CD4-positive, alpha-beta T cell (primary cell): ENCODE measurements at regions of chr11 and their contacts with region 1.

Region 1: GRCh38 chr11:2725368-2726300 is 25.8 kb upstream of the KCNQ1OT1 start:
- DNase-seq: no peak
- ATAC-seq: no peak
- H3K4me3 ChIP-seq: no peak overlapping the region
- H3K4me3 Mint-ChIP-seq: no peak overlapping the region
- H3K27ac ChIP-seq: no peak overlapping the region
- H3K27ac Mint-ChIP-seq: no peak overlapping the region
- H3K4me1 ChIP-seq: no peaks in the 10 kb centered on the region
- H3K4me1 Mint-ChIP-seq: no peaks in the 10 kb centered on the region
- H3K27me3 ChIP-seq: no peaks in the 10 kb centered on the region
- H3K27me3 Mint-ChIP-seq: no peaks in the 10 kb centered on the region
- CTCF ChIP-seq: no peak

Region 2: DNA sequence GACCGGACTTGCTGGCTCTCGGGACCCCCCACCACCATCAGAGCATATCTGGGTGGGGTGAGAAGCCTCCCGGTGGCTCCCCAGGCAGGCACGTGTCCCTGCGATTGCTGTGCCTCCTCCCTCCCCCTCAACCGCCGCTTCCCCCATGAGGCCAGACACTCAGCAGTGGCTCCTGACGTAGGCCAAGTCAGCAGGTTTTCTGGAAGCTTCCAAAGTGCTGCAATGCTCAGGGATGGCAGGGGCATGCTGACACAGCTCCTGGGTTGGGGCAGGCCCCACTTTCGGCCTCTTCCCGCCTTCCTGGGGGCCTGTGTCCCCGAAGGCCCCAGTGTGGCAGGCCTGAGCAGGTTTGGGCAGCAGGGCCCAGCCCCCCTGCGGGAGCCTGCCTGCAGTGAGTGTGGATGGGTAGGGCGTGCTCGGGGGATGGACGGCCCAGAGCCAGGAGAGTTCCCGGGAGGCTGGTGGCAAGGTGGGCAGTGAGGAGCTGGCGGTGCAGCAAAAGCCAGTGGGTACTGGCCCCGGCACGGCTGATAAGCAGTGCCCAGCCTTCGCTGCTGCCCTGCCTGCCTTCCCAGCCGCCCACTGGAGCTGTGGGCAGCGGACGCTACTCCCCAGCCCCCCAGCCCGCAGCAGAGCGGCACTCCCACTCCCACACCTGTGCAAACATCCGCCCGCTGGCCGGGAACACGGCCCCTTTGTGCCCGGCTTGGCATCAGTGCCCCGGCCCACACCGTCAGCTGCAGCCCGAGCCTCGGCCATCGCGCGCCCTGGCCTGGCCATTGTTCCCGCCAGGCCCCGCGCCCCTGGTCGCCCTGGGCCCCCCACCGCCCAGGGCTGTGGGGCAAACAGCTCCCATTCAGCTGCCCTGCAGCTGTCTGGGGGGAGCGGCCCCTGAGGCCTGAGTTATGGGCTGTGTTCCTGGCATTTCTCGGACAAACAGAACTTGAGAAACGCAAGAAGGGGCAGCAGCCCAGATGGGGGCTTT is 150.8 kb before region 1 on chr11:
- CTCF ChIA-PET with region 1: no interaction called
- POLR2A ChIA-PET with region 1: no interaction called
- intact Hi-C with region 1: loop called in 1 of 2 experiments (anchors 10 kb)
- DNase-seq: peak in 1 of 14 experiments; percentile 2
- ATAC-seq: no peak
- H3K4me3 ChIP-seq: no peak overlapping the region
- H3K4me3 Mint-ChIP-seq: no peak overlapping the region
- H3K27ac ChIP-seq: no peak overlapping the region
- H3K27ac Mint-ChIP-seq: no peak overlapping the region
- H3K4me1 ChIP-seq: no peaks in the 10 kb centered on the region
- H3K4me1 Mint-ChIP-seq: no peaks in the 10 kb centered on the region
- H3K27me3 ChIP-seq: no peaks in the 10 kb centered on the region
- H3K27me3 Mint-ChIP-seq: no peaks in the 10 kb centered on the region
- CTCF ChIP-seq: no peak

Region 3: DNA sequence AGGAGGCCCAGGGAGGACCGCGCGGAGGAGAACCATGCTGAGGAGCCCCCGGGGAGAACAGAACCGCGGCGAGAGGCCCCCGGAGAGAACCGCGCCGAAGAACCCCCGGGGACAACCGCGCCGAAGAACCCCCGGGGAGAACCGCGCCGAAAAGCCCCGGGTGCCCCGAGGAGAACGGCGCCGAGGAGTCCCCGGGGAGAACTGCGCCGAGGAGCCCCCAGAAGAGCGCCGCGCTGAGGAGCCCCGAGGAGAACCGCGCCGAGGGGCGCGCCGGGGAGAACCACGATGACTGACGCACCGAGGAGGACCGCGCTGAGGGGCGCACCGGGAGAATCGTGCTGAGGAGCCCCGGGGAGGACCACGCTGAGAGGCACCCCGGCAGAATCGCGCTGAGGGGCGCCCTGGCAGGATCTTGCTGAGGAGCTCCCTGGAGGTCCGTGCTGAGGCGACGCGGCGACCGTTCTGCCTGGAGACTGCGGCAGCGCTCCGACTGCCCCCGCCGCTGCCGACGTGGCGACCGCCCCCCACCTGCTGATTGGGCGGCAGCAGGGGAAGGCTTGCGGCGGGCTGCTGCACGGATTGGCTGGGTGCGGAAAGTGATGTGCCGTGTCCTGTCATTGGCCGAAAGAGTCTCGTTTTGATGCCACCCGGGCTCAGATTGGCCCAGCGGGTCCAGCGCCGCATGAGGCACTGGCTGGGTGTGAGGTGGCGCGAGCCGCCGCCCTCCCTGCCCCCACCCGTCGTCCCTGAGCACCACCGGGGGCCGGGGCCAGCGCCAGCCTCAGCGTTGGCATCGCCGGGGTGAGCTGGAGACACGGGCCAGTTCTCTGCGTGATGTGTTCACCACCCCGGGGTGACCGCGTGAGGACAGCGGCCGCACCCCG is 25.9 kb before region 1 on chr11 and contains the start of gene KCNQ1OT1:
- CTCF ChIA-PET with region 1: no interaction called
- POLR2A ChIA-PET with region 1: no interaction called
- intact Hi-C with region 1: no loop called
- DNase-seq: peak; percentile 73 to 95 (median 82)
- ATAC-seq: peak; percentile 97
- H3K4me3 ChIP-seq: peak within 1 kb of the TSS; percentile 66
- H3K4me3 Mint-ChIP-seq: peak within 1 kb of the TSS; percentile 80
- H3K27ac ChIP-seq: no peak within 1 kb of the TSS
- H3K27ac Mint-ChIP-seq: peak within 1 kb of the TSS; percentile 33
- H3K4me1 ChIP-seq: peaks cover 18% of the 10 kb centered on the region
- H3K4me1 Mint-ChIP-seq: peaks cover 7% of the 10 kb centered on the region
- H3K27me3 ChIP-seq: no peaks in the 10 kb centered on the region
- H3K27me3 Mint-ChIP-seq: no peaks in the 10 kb centered on the region
- CTCF ChIP-seq: no peak
- total RNA-seq, gene KCNQ1OT1: 0.17 to 0.22 TPM

Region 4: GRCh38 chr11:2804701-2805387 is 79.2 kb after region 1 on chr11:
- CTCF ChIA-PET with region 1: no interaction called
- POLR2A ChIA-PET with region 1: no interaction called
- intact Hi-C with region 1: no loop called
- DNase-seq: peak in 3 of 14 experiments; percentile 0 to 32 (median 1)
- ATAC-seq: no peak
- H3K4me3 ChIP-seq: no peak overlapping the region
- H3K4me3 Mint-ChIP-seq: no peak overlapping the region
- H3K27ac ChIP-seq: no peak overlapping the region
- H3K27ac Mint-ChIP-seq: no peak overlapping the region
- H3K4me1 ChIP-seq: no peaks in the 10 kb centered on the region
- H3K4me1 Mint-ChIP-seq: peaks cover 19% of the 10 kb centered on the region
- H3K27me3 ChIP-seq: no peaks in the 10 kb centered on the region
- H3K27me3 Mint-ChIP-seq: no peaks in the 10 kb centered on the region
- CTCF ChIP-seq: no peak